Gastrocnemius medialis (tissue), 4 donors: ENCODE measurements at regions of chr4 and their contacts with region 1.

Region 1: GRCh38 chr4:118772081-118772766 is 63.7 kb downstream of the SEC24D start:
- DNase-seq: no peak
- ATAC-seq: peak; percentile 89
- H3K4me3 ChIP-seq: peak overlapping the region in 2 of 4 donors; percentile 2 to 21
- H3K27ac ChIP-seq: peak overlapping the region in 2 of 4 donors; percentile 11 to 36
- H3K4me1 ChIP-seq: peaks cover 12 to 18% of the 10 kb centered on the region in 2 donors
- H3K27me3 ChIP-seq: no peaks in the 10 kb centered on the region
- CTCF ChIP-seq: peak; percentile 54 to 84 (median 60)
- POLR2A ChIP-seq: no peak

Region 2: GRCh38 chr4:118235566-118236120 is 536.6 kb before region 1 on chr4:
- in situ Hi-C with region 1: no loop called
- intact Hi-C with region 1: no loop called
- DNase-seq: no peak
- ATAC-seq: no peak
- H3K4me3 ChIP-seq: no peak overlapping the region
- H3K27ac ChIP-seq: no peak overlapping the region
- H3K4me1 ChIP-seq: no peaks in the 10 kb centered on the region
- H3K27me3 ChIP-seq: no peaks in the 10 kb centered on the region
- CTCF ChIP-seq: no peak
- POLR2A ChIP-seq: no peak

Region 3: GRCh38 chr4:118798658-118799057 is 26.4 kb after region 1 on chr4:
- in situ Hi-C with region 1: no loop called
- intact Hi-C with region 1: no loop called
- DNase-seq: no peak
- ATAC-seq: no peak
- H3K4me3 ChIP-seq: no peak overlapping the region
- H3K27ac ChIP-seq: no peak overlapping the region
- H3K4me1 ChIP-seq: peaks cover 6 to 11% of the 10 kb centered on the region in 2 donors
- H3K27me3 ChIP-seq: no peaks in the 10 kb centered on the region
- CTCF ChIP-seq: no peak
- POLR2A ChIP-seq: no peak

Region 4: GRCh38 chr4:118865091-118865708 is 93.0 kb after region 1 on chr4:
- in situ Hi-C with region 1: no loop called
- intact Hi-C with region 1: loop called (anchors 2 kb)
- DNase-seq: peak in 1 of 2 donors; percentile 43
- ATAC-seq: peak; percentile 83 to 97
- H3K4me3 ChIP-seq: no peak overlapping the region
- H3K27ac ChIP-seq: no peak overlapping the region
- H3K4me1 ChIP-seq: peaks cover 0 to 5% of the 10 kb centered on the region in 2 donors
- H3K27me3 ChIP-seq: no peaks in the 10 kb centered on the region
- CTCF ChIP-seq: peak; percentile 13 to 66 (median 51)
- POLR2A ChIP-seq: no peak

Region 5: DNA sequence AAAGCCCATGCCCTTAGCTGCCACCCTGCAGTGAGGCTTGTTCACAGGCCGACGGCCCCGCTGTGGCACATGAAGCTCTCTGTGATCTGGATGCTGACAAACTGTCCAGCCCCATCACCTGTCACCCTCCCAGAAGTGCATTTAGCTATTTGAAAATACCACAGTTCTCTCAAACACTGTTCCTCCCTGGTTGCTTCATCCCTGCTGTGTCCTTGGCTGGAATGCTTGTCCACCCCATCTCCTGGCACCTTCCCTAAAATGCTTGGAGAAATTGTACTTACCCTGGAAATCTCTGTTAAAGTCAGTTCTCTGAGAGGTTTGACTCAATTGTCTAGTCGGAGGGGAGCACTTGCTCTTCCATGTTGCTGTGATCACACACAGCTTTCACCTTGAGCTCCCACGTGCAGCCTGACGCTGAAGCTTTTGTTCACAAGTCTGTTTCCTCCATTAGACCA is 126.5 kb after region 1 on chr4:
- in situ Hi-C with region 1: loop called in 2 of 4 experiments (anchors 10 kb)
- intact Hi-C with region 1: no loop called
- DNase-seq: peak; percentile 29 to 73
- ATAC-seq: peak; percentile 79 to 84
- H3K4me3 ChIP-seq: peak overlapping the region; percentile 6 to 25 (median 20)
- H3K27ac ChIP-seq: peak overlapping the region; percentile 72 to 88 (median 85)
- H3K4me1 ChIP-seq: peaks cover 32 to 49% of the 10 kb centered on the region in 2 donors
- H3K27me3 ChIP-seq: no peaks in the 10 kb centered on the region
- CTCF ChIP-seq: no peak
- POLR2A ChIP-seq: peak; percentile 12 to 20

Region 6: DNA sequence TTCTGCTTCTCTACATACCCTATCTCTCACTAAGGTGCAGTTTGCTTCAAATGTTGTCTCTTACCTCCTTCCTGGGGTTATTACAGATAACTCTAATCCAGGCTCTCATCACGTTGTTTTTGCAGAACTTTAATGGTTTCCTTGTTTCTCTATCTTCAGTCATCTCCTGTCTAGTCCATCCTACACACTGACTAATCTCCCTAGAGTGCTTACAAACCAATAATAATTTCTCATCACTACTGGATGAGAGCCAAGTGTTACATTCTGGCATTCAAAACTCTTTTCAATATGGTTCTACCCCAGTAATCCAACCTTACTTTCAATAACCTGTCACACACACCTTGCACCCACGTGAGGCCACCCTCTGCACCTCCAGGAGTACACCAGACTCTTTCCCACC is 202.5 kb after region 1 on chr4:
- in situ Hi-C with region 1: loop called in 3 of 4 experiments (anchors 5 to 10 kb)
- intact Hi-C with region 1: loop called (anchors 1 kb)
- DNase-seq: no peak
- ATAC-seq: no peak
- H3K4me3 ChIP-seq: peak overlapping the region in 3 of 4 donors; percentile 23 to 43 (median 39)
- H3K27ac ChIP-seq: peak overlapping the region; percentile 87 to 99 (median 92)
- H3K4me1 ChIP-seq: peaks cover 40 to 46% of the 10 kb centered on the region in 2 donors
- H3K27me3 ChIP-seq: no peaks in the 10 kb centered on the region
- CTCF ChIP-seq: no peak
- POLR2A ChIP-seq: no peak